HepG2 (cell line): ENCODE measurements at regions of chr2 and their contacts with region 1.

Region 1: DNA sequence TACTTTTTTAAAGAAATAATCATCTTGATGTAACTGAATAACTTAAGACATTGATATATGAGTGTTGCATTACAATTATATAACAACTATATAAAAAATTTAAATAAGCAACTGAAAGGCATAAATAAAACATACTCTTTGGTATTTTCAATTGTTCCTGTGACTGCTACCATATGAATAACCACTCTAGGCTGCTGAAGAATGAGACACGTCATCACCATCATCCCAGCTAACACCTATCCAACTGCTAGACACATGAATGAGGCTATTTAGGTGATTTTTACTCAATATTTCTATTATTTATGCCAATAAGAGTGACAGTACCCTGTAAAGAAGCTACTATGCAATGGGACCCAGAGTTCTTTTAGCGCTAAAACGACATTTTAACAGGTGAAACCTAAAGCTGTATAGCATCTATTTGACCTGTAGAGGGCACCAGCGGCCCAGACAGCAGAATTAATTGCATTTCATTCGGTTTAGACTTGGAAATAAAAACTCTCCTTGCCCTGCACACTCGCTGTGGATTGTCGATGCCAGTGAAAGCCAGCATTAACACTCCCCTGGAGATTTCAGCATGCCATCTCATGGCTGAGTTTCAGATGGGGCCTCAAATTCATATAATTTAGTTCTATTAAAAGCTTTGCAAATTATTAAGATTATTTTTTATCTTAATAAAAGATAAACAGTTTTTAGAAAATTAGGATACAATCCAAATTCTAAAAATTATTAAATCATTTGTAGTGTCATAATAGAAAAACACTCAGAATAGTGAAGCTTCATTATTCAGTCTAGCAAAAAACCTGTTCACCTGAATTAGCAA is 89.4 kb upstream of the MAP2 start:
- DNase-seq: peak; percentile 53
- ATAC-seq: peak; percentile 87
- H3K4me3 ChIP-seq: no peak overlapping the region
- H3K27ac ChIP-seq: no peak overlapping the region
- H3K4me1 ChIP-seq: no peaks in the 10 kb centered on the region
- H3K27me3 ChIP-seq: no peaks in the 10 kb centered on the region
- CTCF ChIP-seq: peak; percentile 84
- EP300 ChIP-seq: no peak
- POLR2A ChIP-seq: no peak
- RAD21 ChIP-seq: peak; percentile 54; the same call in 1 of the 2 replicates

Region 2: GRCh38 chr2:208466151-208466919 is 868.1 kb before region 1 on chr2:
- CTCF ChIA-PET with region 1: interaction called, 5 read pairs
- POLR2A ChIA-PET with region 1: no interaction called
- in situ Hi-C with region 1: no loop called
- intact Hi-C with region 1: loop called (anchors 1 kb)
- DNase-seq: peak; percentile 61
- ATAC-seq: peak; percentile 95
- H3K4me3 ChIP-seq: no peak overlapping the region
- H3K27ac ChIP-seq: no peak overlapping the region
- H3K4me1 ChIP-seq: no peaks in the 10 kb centered on the region
- H3K27me3 ChIP-seq: no peaks in the 10 kb centered on the region
- CTCF ChIP-seq: peak; percentile 86
- EP300 ChIP-seq: no peak
- POLR2A ChIP-seq: no peak
- RAD21 ChIP-seq: peak; percentile 76

Region 3: GRCh38 chr2:209556354-209556961 is 222.1 kb after region 1 on chr2:
- CTCF ChIA-PET with region 1: no interaction called
- POLR2A ChIA-PET with region 1: no interaction called
- in situ Hi-C with region 1: loop called (anchors 25 kb)
- intact Hi-C with region 1: loop called (anchors 1 kb)
- DNase-seq: peak; percentile 32
- ATAC-seq: peak; percentile 84
- H3K4me3 ChIP-seq: no peak overlapping the region
- H3K27ac ChIP-seq: no peak overlapping the region
- H3K4me1 ChIP-seq: no peaks in the 10 kb centered on the region
- H3K27me3 ChIP-seq: no peaks in the 10 kb centered on the region
- CTCF ChIP-seq: peak; percentile 45
- EP300 ChIP-seq: no peak
- POLR2A ChIP-seq: no peak
- RAD21 ChIP-seq: no peak

Region 4: GRCh38 chr2:209960676-209961630 is 626.5 kb after region 1 on chr2:
- CTCF ChIA-PET with region 1: no interaction called
- POLR2A ChIA-PET with region 1: no interaction called
- in situ Hi-C with region 1: loop called (anchors 25 kb)
- intact Hi-C with region 1: loop called (anchors 1 kb)
- DNase-seq: peak; percentile 67
- ATAC-seq: peak; percentile 98
- H3K4me3 ChIP-seq: no peak overlapping the region
- H3K27ac ChIP-seq: no peak overlapping the region
- H3K4me1 ChIP-seq: no peaks in the 10 kb centered on the region
- H3K27me3 ChIP-seq: 0 out of 5 replicates have a peak, but pooled peaks cover 0 to 12% of the 10 kb centered on the region in 2 experiments
- CTCF ChIP-seq: peak; percentile 85
- EP300 ChIP-seq: no peak
- POLR2A ChIP-seq: no peak
- RAD21 ChIP-seq: peak; percentile 45; the same call in 1 of the 2 replicates

Region 5: GRCh38 chr2:210028178-210028577 is 693.8 kb after region 1 on chr2:
- CTCF ChIA-PET with region 1: no interaction called
- POLR2A ChIA-PET with region 1: no interaction called
- in situ Hi-C with region 1: no loop called
- intact Hi-C with region 1: no loop called
- DNase-seq: no peak
- ATAC-seq: no peak
- H3K4me3 ChIP-seq: no peak overlapping the region
- H3K27ac ChIP-seq: no peak overlapping the region
- H3K4me1 ChIP-seq: no peaks in the 10 kb centered on the region
- H3K27me3 ChIP-seq: no peaks in the 10 kb centered on the region
- CTCF ChIP-seq: no peak
- EP300 ChIP-seq: no peak
- POLR2A ChIP-seq: no peak
- RAD21 ChIP-seq: no peak